HCT116 (cell line): ENCODE measurements at regions of chr3 and their contacts with region 1.

Region 1: DNA sequence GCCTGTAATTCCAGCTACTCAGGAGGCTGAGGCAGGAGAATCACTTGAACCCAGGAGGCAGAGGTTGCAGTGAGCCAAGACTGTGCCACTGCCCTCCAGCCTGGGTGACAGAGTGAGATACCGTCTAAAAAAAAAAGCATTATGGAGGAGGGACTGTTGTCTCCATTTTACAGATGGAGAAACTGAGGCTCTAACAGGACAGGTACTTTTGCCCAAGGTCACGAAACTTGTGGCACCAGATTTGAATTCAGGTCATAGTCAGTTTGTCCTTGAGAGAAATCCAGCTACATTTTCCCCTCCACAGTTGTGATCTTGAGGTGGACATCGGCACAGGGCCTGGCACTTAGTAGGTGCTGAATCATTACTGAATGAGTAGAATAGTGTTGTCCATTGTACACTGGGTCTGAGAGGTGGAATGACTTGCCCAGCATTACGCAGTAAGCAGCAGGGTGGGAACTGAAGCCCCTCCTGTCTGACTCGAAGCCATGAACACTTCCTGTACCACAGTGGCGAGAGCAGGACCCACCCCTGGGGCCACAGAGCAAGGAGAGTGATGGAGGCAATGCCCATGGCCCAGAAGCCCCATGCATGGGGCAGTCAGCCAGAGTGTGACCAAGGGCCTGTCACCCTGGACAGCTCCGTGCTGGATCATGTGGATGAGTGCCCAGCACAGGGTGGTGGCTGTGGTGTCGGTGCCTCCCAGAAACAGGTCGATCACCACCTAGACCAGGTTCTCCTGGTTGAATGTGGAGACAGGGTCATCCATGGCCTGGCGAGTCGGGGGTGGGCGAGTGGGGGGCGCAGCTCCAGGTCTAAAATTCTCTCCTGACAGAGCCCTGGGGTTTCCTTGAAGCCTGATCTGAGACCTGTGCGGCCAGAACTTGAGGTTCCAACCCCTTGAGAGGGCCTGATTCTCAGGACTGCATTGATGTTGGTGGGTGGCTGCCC is 20.4 kb upstream of the PARL start:
- DNase-seq: no peak
- ATAC-seq: 0 out of 2 replicates have a peak, but pooled peaks have one; percentile 37
- H3K4me3 ChIP-seq: no peak overlapping the region
- H3K27ac ChIP-seq: no peak overlapping the region
- H3K4me1 ChIP-seq: no peaks in the 10 kb centered on the region
- H3K27me3 ChIP-seq: no peaks in the 10 kb centered on the region
- CTCF ChIP-seq: no peak
- POLR2A ChIP-seq: no peak
- RAD21 ChIP-seq: no peak

Region 2: GRCh38 chr3:183427876-183428446 is 477.1 kb before region 1 on chr3:
- CTCF ChIA-PET with region 1: no interaction called
- POLR2A ChIA-PET with region 1: no interaction called
- RAD21 ChIA-PET with region 1: no interaction called
- intact Hi-C with region 1: no loop called
- DNase-seq: no peak
- ATAC-seq: peak; percentile 78
- H3K4me3 ChIP-seq: peak overlapping the region; percentile 63 to 80
- H3K27ac ChIP-seq: peak overlapping the region; percentile 20; the same call in 1 of the 2 replicates
- H3K4me1 ChIP-seq: peaks cover 4 to 13% of the 10 kb centered on the region in 2 experiments; a peak in 2 of 4 replicates
- H3K27me3 ChIP-seq: no peaks in the 10 kb centered on the region
- CTCF ChIP-seq: no peak
- POLR2A ChIP-seq: no peak
- RAD21 ChIP-seq: no peak

Region 3: GRCh38 chr3:184017672-184018423 is 112.7 kb after region 1 on chr3 and contains the start of gene ABCC5:
- CTCF ChIA-PET with region 1: interaction called, 8 read pairs
- POLR2A ChIA-PET with region 1: no interaction called
- RAD21 ChIA-PET with region 1: interaction called in 1 of 2 experiments, 3 read pairs
- intact Hi-C with region 1: loop called (anchors 1 kb)
- DNase-seq: peak; percentile 70
- ATAC-seq: peak; percentile 97
- H3K4me3 ChIP-seq: peak within 1 kb of the TSS; percentile 83 to 100
- H3K27ac ChIP-seq: peak within 1 kb of the TSS; percentile 71
- H3K4me1 ChIP-seq: peaks cover 4 to 13% of the 10 kb centered on the region in 2 experiments; a peak in 3 of 4 replicates
- H3K27me3 ChIP-seq: no peaks in the 10 kb centered on the region
- CTCF ChIP-seq: peak in 1 of 3 experiments; percentile 31; a peak in 1 of 6 replicates
- POLR2A ChIP-seq: peak; percentile 87
- RAD21 ChIP-seq: no peak
- total RNA-seq, gene ABCC5: 16.9 TPM

Region 4: GRCh38 chr3:184117636-184118035 is 212.5 kb after region 1 on chr3:
- CTCF ChIA-PET with region 1: interaction called, 4 read pairs
- POLR2A ChIA-PET with region 1: no interaction called
- RAD21 ChIA-PET with region 1: no interaction called
- intact Hi-C with region 1: loop called (anchors 1 kb)
- DNase-seq: no peak
- ATAC-seq: peak; percentile 46; the same call in 1 of the 2 replicates
- H3K4me3 ChIP-seq: no peak overlapping the region
- H3K27ac ChIP-seq: no peak overlapping the region
- H3K4me1 ChIP-seq: no peaks in the 10 kb centered on the region
- H3K27me3 ChIP-seq: peaks cover 3% of the 10 kb centered on the region; the same call in 1 of the 2 replicates
- CTCF ChIP-seq: 0 out of 6 replicates have a peak, but pooled peaks of 2 of the 3 experiments have one; percentile 15 to 22
- POLR2A ChIP-seq: no peak
- RAD21 ChIP-seq: peak; percentile 54